Endothelial cell of umbilical vein (primary cell): ENCODE measurements at regions of chr6 and their contacts with region 1.

Region 1: DNA sequence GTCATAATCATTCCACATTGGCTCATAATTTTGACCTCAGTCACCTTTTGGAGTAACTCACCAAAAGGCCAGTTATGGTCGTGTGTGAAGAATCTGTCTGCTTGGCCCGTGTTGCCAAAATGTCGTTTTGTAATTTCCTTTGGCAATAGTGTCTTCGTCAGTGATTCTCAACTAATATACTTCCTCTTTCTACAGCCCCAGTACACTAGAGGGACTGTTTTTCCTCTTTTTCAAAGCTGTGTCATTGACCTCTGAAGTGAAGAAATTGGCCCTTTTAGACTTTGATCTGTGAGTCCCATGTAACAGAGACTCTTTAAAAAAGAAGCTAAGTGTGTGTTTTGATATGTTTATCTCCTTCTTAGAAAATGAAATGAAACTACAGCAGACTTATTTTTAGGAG is 5.2 kb downstream of the FOXO3 start:
- DNase-seq: peak; percentile 69
- H3K4me3 ChIP-seq: no peak overlapping the region
- H3K27ac ChIP-seq: peak overlapping the region; percentile 4
- H3K4me1 ChIP-seq: peaks cover 46% of the 10 kb centered on the region
- H3K27me3 ChIP-seq: no peaks in the 10 kb centered on the region
- CTCF ChIP-seq: no peak
- POLR2A ChIP-seq: no peak

Region 2: DNA sequence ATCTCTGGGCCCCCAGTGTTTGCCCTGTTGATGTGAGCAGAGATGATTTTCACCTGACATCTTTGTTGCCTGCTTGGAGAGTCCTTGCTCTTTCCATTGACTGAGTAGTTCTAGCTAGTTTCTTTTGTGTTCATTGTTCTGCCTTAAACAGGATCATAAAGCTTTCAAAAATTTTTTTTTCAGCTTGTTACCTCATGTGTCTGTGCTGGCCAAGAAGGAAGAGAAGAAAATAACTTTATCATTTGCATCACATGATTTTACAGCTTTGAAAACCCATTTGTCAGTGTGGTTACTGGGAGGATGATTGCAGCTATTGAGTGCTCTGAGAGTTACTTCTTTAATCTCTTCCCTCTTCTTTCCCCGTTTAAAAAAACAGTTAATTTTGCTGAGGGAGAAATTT is 10.8 kb after region 1 on chr6:
- CTCF ChIA-PET with region 1: interaction called, 19 read pairs
- POLR2A ChIA-PET with region 1: no interaction called
- dilution Hi-C with region 1: no loop called
- intact Hi-C with region 1: no loop called
- DNase-seq: no peak
- H3K4me3 ChIP-seq: no peak overlapping the region
- H3K27ac ChIP-seq: no peak overlapping the region
- H3K4me1 ChIP-seq: peaks cover 12% of the 10 kb centered on the region
- H3K27me3 ChIP-seq: no peaks in the 10 kb centered on the region
- CTCF ChIP-seq: no peak
- POLR2A ChIP-seq: no peak

Region 3: GRCh38 chr6:108589287-108589791 is 23.4 kb after region 1 on chr6:
- CTCF ChIA-PET with region 1: interaction called, 7 read pairs
- POLR2A ChIA-PET with region 1: interaction called, 11 read pairs
- dilution Hi-C with region 1: no loop called
- intact Hi-C with region 1: loop called (anchors 1 kb)
- DNase-seq: peak; percentile 85
- H3K4me3 ChIP-seq: no peak overlapping the region
- H3K27ac ChIP-seq: peak overlapping the region; percentile 66
- H3K4me1 ChIP-seq: peaks cover 54% of the 10 kb centered on the region
- H3K27me3 ChIP-seq: no peaks in the 10 kb centered on the region
- CTCF ChIP-seq: no peak
- POLR2A ChIP-seq: peak; percentile 20

Region 4: DNA sequence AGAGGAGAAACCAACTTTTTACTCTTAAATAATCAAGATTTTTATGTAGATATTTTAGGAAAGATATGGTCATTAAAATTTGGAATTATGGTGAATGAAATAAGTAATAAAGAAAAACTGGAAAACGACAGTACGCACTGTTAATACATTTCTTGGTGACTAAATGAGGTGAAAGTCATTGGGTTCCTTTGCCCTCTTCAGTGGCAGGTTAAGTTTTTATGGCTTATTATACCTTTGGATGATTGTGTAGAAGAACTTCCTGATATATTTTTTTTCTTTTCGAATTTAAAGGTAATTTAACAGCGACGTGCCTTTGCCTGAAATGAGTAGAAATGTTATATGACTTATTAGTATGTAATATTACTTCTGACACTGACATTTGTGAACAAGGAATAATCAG is 38.3 kb after region 1 on chr6:
- CTCF ChIA-PET with region 1: no interaction called
- POLR2A ChIA-PET with region 1: no interaction called
- dilution Hi-C with region 1: no loop called
- intact Hi-C with region 1: no loop called
- DNase-seq: no peak
- H3K4me3 ChIP-seq: no peak overlapping the region
- H3K27ac ChIP-seq: no peak overlapping the region
- H3K4me1 ChIP-seq: no peaks in the 10 kb centered on the region
- H3K27me3 ChIP-seq: no peaks in the 10 kb centered on the region
- CTCF ChIP-seq: no peak
- POLR2A ChIP-seq: no peak

Region 5: GRCh38 chr6:108619431-108620197 is 53.7 kb after region 1 on chr6:
- CTCF ChIA-PET with region 1: no interaction called
- POLR2A ChIA-PET with region 1: no interaction called
- dilution Hi-C with region 1: no loop called
- intact Hi-C with region 1: loop called (anchors 2 kb)
- DNase-seq: peak; percentile 46
- H3K4me3 ChIP-seq: no peak overlapping the region
- H3K27ac ChIP-seq: no peak overlapping the region
- H3K4me1 ChIP-seq: peaks cover 13% of the 10 kb centered on the region
- H3K27me3 ChIP-seq: no peaks in the 10 kb centered on the region
- CTCF ChIP-seq: no peak
- POLR2A ChIP-seq: no peak

Region 6: DNA sequence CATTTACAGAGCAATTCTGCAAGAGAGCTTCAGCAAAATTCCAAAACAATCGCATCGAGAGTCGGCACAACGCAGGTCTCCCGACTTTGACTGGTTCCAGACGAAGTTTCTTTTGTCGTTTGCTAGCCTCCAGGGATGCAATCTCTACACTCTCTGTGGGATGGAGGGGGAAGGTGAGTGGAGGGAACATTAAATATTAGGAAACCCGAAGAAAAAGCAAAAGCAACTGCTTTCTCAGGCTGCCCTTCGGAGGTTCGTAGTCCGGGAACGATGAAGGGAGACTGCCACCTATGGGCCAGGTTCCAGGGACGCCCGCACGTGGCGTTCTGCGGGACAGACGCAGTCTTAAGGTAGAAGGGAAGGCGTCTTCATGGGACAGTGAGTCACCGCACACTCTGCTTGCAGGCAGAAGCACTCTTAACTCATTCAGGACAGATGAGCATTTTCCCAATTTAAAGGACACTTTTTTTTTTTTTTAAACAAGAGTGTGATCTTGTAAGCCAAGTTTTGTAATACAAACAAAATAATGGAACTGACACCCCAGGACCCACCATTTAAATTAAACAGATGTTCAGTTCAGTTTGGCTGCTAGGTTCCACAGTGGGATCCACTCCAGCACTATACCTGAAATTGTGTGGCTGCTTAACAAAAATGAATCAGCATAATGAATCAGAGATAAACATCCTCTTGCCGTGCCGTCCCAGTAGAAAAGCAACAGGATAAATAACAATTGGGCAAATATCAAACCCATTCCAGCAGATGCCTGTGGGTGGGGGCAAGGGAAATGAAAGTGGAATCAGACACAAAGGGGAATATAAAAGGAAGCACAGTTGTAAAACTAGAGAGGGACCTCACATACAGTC is 216.5 kb after region 1 on chr6:
- CTCF ChIA-PET with region 1: interaction called, 17 read pairs
- POLR2A ChIA-PET with region 1: no interaction called
- dilution Hi-C with region 1: no loop called
- intact Hi-C with region 1: no loop called
- DNase-seq: peak; percentile 88
- H3K4me3 ChIP-seq: peak overlapping the region; percentile 56 to 79 (median 60)
- H3K27ac ChIP-seq: no peak overlapping the region
- H3K4me1 ChIP-seq: peaks cover 18% of the 10 kb centered on the region
- H3K27me3 ChIP-seq: no peaks in the 10 kb centered on the region
- CTCF ChIP-seq: peak; percentile 72 to 85
- POLR2A ChIP-seq: no peak